Dorsolateral prefrontal cortex (tissue), 120 donors: ENCODE measurements at regions of chr17 and their contacts with region 1.

Region 1: DNA sequence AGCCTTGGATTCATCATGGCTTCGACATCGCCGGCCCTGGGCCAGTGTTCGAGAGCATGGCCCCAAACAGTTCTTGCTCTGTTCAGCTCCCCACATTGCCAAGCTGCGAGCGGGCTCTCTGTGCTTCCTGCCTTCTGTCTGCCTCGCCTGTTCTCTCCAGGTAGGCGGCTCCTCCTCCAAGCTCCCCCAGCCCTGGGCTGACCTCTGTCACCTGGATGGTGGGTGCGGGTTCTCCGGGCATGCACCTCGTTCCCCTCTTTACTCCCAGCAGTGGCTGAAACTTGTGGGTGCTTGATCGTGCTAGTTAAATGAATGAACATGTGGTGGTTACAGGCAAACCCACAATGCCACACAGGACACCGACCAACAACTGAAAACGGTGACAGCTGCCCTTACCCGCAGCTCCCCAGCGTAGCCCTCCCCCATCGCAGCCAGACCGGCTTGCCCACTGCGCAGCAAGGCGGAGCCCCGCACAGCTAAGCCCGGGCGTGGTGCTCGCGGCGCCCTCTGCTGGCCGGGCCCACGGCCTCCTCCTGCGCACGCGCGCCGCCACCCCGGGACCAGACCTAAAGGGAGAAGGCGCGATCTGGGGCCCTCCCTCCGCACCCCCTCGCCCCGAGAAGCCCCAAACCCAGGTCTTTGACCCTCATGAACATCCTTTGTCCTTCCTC is 23.0 kb upstream of the EIF1 start:
- DNase-seq: peak; percentile 73 to 94 (median 85)
- H3K4me3 ChIP-seq: peak overlapping the region; percentile 38 to 78 (median 60)
- H3K27ac ChIP-seq: peak overlapping the region in 58 of 59 donors; percentile 62 to 97 (median 88)
- H3K27me3 ChIP-seq: no peaks in the 10 kb centered on the region
- CTCF ChIP-seq: peak; percentile 81 to 100 (median 96)

Region 2: GRCh38 chr17:40803617-40804082 is 862.1 kb before region 1 on chr17:
- intact Hi-C with region 1: loop called in 1 of 2 experiments (anchors 5 kb)
- DNase-seq: peak; percentile 48 to 74 (median 65)
- H3K4me3 ChIP-seq: no peak overlapping the region
- H3K27ac ChIP-seq: no peak overlapping the region
- H3K27me3 ChIP-seq: peaks cover 0 to 90% (median 28%) of the 10 kb centered on the region in 45 donors
- CTCF ChIP-seq: peak; percentile 35 to 87 (median 74)

Region 3: GRCh38 chr17:40909351-40909750 is 756.4 kb before region 1 on chr17:
- intact Hi-C with region 1: loop called in 1 of 2 experiments (anchors 5 kb)
- DNase-seq: peak in 9 of 10 donors; percentile 68 to 82 (median 71)
- H3K4me3 ChIP-seq: no peak overlapping the region
- H3K27ac ChIP-seq: peak overlapping the region in 22 of 59 donors; percentile 2 to 78 (median 42)
- H3K27me3 ChIP-seq: peaks cover 0 to 17% (median 0%) of the 10 kb centered on the region in 45 donors
- CTCF ChIP-seq: peak; percentile 61 to 98 (median 84)

Region 4: GRCh38 chr17:41648411-41649195 is 17.1 kb before region 1 on chr17:
- intact Hi-C with region 1: loop called (anchors 1 to 2 kb)
- DNase-seq: peak; percentile 70 to 89 (median 78)
- H3K4me3 ChIP-seq: peak overlapping the region; percentile 12 to 67 (median 48)
- H3K27ac ChIP-seq: peak overlapping the region in 23 of 59 donors; percentile 13 to 76 (median 46)
- H3K27me3 ChIP-seq: no peaks in the 10 kb centered on the region
- CTCF ChIP-seq: peak; percentile 55 to 98 (median 93)

Region 5: GRCh38 chr17:41750862-41751261 is 85.2 kb after region 1 on chr17:
- intact Hi-C with region 1: no loop called
- DNase-seq: peak in 1 of 10 donors; percentile 41
- H3K4me3 ChIP-seq: no peak overlapping the region
- H3K27ac ChIP-seq: no peak overlapping the region
- H3K27me3 ChIP-seq: no peaks in the 10 kb centered on the region
- CTCF ChIP-seq: no peak